Ascending aorta (tissue), 2 donors: ENCODE measurements at regions of chr14 and their contacts with region 1.

Region 1: GRCh38 chr14:73503648-73504047 is 12.9 kb downstream of the RIOX1 start:
- DNase-seq: no peak
- H3K4me3 ChIP-seq: no peak overlapping the region
- H3K27ac ChIP-seq: no peak overlapping the region
- H3K4me1 ChIP-seq: no peaks in the 10 kb centered on the region
- H3K27me3 ChIP-seq: no peaks in the 10 kb centered on the region
- CTCF ChIP-seq: no peak

Region 2: DNA sequence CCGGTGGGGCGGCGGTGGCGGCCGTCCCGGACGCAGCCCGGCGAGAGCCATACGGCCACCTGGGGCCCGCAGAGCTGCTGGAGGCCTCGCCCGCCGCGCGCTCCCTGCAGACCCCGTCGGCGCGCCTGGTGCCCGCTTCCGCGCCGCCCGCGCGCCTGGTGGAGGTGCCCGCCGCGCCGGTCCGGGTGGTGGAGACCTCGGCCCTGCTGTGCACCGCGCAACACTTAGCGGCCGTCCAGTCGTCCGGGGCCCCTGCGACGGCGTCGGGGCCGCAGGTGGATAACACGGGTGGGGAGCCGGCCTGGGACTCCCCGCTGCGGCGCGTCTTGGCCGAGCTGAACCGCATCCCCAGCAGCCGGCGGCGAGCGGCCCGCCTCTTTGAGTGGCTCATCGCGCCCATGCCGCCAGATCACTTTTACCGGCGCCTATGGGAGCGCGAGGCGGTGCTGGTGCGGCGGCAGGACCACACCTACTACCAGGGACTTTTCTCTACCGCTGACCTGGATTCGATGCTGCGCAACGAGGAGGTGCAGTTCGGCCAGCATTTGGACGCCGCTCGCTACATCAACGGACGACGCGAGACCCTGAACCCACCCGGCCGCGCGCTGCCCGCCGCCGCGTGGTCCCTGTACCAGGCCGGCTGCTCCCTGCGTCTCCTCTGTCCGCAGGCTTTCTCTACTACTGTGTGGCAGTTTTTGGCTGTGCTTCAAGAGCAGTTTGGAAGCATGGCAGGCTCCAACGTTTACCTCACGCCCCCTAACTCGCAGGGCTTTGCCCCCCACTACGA is 12.2 kb before region 1 on chr14:
- intact Hi-C with region 1: no loop called
- DNase-seq: peak in 1 of 2 donors; percentile 72
- H3K4me3 ChIP-seq: peak overlapping the region; percentile 77 to 87
- H3K27ac ChIP-seq: peak overlapping the region; percentile 71 to 78
- H3K4me1 ChIP-seq: peaks cover 8 to 25% of the 10 kb centered on the region in 2 donors
- H3K27me3 ChIP-seq: no peaks in the 10 kb centered on the region
- CTCF ChIP-seq: no peak

Region 3: DNA sequence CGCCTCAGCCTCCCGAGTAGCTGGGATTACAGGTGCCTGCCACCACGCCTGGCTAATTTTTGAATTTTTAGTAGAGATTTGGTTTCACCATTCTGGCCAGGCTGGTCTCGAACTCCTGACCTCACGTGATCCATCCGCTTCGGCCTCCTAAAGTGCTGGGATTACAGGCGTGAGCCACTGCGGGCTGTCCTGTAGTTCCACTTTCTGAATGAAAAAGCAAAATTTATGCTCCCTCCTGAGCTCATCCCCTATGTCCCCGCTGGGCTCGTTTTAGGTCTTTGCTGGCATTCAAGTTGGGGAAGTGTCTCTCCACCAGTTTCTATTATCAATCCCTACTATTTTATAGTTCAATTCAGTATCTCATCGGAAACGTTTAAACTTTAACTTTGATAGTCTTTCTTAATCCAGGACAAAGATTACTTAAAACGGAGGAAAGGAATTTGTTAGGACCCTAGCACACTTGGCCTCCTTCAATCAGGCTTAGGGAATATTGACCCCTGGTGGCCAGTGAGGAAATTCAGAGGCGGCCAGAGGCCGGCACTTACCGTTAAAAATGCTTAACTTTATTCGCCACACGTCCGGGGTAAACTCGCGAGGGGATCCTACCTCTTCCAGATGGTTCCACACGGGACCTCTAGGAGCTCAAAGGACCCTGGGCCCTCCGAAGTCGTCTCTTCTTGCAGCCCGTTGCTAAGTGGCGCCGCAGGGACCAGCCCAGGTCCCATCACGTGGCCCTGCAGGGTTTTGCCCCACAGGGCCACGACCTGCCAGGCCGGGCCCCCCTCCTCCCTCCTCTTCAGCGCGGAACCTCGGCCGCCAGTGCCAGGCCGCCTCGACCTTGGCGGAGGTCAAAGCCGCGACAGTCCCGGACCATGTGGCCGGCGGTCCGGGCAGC is 129.7 kb after region 1 on chr14:
- intact Hi-C with region 1: loop called (anchors 1 kb)
- DNase-seq: peak in 1 of 2 donors; percentile 83
- H3K4me3 ChIP-seq: peak overlapping the region; percentile 43 to 82
- H3K27ac ChIP-seq: peak overlapping the region; percentile 30 to 72
- H3K4me1 ChIP-seq: no peaks in the 10 kb centered on the region
- H3K27me3 ChIP-seq: no peaks in the 10 kb centered on the region
- CTCF ChIP-seq: peak; percentile 83 to 87 (median 84)

Region 4: DNA sequence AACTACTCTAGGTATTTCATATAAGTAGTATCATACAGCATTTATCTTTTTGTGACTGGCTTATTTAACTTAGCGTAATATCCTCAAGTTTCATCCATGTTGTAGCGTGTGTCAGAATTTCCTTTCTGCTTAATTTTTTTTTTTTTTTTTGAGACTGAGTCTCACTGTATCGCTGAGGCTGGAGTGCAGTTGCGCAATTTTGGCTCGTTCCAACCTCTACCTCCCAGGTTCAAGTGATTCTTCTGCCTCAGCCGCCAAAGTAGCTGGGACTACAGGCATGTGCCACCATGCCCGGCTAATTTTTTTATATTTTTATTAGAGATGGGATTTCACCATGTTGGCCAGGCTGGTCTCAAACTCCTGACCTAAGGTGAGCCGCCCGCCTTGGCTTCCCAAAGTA is 181.7 kb after region 1 on chr14:
- intact Hi-C with region 1: no loop called
- DNase-seq: no peak
- H3K4me3 ChIP-seq: no peak overlapping the region
- H3K27ac ChIP-seq: no peak overlapping the region
- H3K4me1 ChIP-seq: no peaks in the 10 kb centered on the region
- H3K27me3 ChIP-seq: no peaks in the 10 kb centered on the region
- CTCF ChIP-seq: no peak